GM18951 (cell line): ENCODE measurements at regions of chr12 and their contacts with region 1.

Region 1: DNA sequence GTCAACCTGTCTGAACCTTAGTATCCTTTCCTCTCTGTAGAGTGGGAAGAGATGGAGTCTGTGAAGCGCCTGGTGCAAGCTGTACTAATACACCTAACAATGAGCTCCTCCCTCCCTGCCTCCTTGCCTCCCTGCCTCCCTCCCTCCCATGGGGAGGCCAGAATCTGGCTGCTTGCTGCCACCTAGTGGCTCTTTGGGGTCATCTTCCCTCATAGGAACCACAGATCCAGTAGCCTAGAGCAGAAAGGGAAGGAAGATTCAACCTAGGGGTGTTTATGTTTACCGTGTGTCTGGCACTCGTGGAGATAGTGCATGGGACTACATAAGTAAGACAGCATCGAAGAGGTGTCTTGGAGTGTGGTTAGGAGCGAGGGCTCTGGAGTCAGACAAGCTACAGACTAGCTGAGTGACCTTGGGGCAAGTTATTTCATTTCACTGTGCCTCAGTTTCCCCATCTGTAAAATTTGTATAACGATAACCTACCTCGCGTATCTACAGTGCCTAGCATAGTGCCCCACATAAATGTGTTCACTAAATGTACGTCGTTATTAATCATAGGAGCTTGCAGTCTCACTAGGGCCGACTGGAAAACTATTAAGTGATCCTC is 35.5 kb upstream of the TSPAN9 start:
- POLR2A ChIP-seq: no peak

Region 2: DNA sequence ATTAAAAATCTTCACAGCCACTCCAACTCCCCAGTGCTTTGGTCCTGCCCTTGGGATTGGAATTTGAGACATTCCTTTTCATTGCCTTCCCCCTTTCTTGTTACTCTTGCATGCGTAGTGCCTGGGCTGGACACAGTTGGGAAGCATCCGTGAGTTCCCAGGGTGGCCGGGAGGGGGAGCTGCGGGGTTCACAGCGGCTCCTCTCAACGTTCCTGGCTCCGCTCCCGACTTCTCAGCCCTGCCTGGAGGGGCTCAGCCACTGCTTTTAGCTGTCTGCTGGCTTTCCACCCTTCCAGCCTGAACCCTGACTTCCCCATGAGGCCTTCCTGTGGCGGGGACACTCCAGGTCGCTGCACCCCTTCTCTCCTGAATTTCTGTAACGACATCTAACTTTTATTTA is 188.0 kb before region 1 on chr12:
- in situ Hi-C with region 1: loop called (anchors 25 kb)
- POLR2A ChIP-seq: no peak